Right ventricle myocardium inferior (tissue), 1 donor: ENCODE measurements at regions of chr19 and their contacts with region 1.

Region 1: GRCh38 chr19:48872182-48872883 is at the start of gene PPP1R15A:
- DNase-seq: peak; percentile 98
- ATAC-seq: peak; percentile 74
- total RNA-seq, gene PPP1R15A: 64.8 TPM

Region 2: GRCh38 chr19:48899781-48900476 is 27.6 kb after region 1 on chr19 and contains the start of gene NUCB1:
- intact Hi-C with region 1: loop called (anchors 2 kb)
- DNase-seq: peak; percentile 99
- ATAC-seq: peak; percentile 98
- total RNA-seq, gene NUCB1: 246 TPM

Region 3: DNA sequence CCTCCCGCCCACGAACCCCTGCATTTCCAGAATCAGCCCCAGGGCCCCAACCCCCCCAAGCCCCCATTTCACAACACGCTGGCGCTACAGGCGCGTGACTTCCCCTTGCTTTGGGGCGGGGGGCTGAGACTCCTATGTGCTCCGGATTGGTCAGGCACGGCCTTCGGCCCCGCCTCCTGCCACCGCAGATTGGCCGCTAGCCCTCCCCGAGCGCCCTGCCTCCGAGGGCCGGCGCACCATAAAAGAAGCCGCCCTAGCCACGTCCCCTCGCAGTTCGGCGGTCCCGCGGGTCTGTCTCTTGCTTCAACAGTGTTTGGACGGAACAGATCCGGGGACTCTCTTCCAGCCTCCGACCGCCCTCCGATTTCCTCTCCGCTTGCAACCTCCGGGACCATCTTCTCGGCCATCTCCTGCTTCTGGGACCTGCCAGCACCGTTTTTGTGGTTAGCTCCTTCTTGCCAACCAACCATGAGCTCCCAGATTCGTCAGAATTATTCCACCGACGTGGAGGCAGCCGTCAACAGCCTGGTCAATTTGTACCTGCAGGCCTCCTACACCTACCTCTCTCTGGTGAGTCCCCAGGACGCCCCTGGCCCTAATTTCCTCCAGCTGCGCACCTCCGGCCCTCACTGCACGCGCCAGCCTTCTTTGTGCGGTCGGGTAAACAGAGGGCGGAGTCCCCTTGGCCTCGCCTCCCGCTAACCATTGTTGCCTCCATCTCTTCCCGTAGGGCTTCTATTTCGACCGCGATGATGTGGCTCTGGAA is 92.9 kb after region 1 on chr19 and contains the start of gene FTL:
- intact Hi-C with region 1: loop called (anchors 2 kb)
- DNase-seq: peak; percentile 99
- ATAC-seq: peak; percentile 89
- total RNA-seq, gene FTL: 1,007 TPM

Region 4: DNA sequence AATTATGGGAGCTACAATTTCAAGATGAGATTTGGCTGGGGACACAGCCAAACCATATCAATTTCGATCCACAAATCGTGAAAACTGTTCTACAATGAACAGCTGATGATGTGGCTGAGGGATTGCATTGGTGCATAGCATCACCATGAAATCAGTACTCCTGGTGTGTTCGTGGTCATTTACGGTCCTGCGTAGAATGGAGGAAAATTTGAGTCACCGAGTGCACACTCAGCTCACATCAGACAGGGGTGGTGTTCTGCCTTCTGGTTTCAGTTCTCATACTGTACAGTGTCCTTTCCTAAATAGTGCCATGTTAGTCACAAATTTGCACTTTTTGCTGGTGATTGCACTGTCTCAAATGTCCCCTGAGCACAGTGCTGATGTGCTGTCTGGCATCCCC is 1370.2 kb after region 1 on chr19:
- intact Hi-C with region 1: no loop called
- DNase-seq: no peak
- ATAC-seq: no peak